Head of caudate nucleus (tissue), 42 donors: ENCODE measurements at regions of chr13 and their contacts with region 1.

Region 1: DNA sequence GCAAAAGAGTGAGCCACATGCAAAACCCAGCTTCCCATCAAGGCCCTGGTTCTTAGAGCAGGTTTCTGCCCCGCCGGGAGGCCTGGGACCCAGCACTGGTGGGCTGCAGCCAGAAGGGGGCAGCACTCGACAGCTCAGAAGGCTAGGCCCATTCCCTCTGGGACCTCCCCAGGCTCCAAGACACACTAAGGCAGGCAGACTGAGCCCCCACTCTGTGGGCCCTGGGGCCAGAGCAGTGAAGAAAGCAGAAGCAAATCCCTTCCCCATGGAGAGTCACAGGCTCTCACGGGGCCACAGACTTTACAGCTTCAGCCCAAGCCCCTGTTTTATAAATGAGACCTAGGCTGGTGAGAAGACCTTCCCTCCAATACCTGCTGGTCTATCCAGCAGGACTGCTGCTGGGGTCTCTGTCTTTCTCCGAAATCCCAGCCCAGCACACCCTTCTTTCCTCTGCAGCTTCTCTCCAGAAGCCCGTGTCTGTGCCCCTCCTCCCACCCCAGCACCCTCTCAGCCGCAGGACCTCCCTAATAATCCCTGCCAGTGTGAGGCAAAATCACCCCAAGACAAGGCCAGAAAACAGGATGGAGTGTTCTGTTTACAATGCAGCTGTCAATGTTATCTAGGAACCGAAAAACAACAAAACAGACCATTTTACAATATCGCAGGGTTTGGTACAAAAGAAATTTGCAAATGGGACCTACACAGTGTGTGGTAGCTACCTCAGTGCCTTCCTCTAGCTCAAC is 109.3 kb downstream of the ABCC4 start:
- DNase-seq: peak; percentile 52 to 89 (median 77)

Region 2: DNA sequence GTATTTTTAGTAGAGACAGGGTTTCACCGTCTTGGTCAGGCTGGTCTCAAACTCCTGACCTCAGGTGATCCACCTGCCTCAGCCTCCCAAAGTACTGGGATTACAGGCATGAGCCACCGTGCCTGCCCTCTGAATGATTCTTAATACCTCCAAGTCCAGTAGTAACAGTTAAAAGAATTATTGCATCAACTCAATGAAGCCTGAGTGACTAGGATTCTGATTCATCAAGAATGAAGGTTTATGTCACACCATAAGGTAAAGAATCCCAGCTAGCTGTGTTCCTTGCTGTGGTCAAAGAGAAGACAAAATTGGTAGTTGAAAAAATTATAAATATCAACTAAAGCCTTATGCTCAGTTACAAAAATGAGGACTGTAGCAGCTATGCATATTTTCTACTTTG is 190.4 kb after region 1 on chr13:
- intact Hi-C with region 1: loop called (anchors 5 kb)
- DNase-seq: no peak

Region 3: DNA sequence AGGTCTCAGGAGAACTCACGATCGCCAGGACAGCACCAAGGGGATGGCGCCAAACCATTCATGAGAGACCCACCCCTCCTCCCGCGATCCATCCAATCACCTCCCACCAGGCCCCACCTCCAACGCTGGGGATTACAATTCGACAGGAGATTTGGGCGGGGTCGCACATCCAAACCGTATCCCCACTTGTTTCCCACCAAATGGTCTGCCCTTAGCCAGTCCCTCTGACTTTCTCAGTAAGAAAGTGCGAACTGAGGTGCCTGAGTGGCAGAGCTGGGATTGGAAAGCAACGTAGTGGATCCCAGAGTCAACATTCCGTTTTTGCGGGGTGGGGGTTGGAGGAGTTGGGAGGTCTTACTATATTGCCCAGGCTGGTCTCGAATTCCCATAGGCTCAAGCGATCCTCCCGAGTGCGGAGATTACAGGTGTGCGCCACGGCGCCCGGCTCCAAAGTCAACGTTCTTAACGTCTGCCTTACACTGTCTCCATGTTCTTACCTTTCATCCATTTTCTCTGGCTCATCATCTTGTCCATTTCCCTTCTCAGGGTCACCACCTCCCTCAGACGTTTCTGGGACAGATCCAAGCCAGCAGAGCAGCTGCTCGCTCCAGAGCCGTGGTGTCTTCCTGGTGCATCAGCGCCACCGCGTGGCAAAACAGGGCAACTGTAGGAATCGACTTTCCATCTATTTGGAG is 212.0 kb after region 1 on chr13:
- intact Hi-C with region 1: loop called (anchors 5 kb)
- DNase-seq: peak; percentile 68 to 93 (median 88)